B cell (primary cell): ENCODE measurements at regions of chr20 and their contacts with region 1.

Region 1: DNA sequence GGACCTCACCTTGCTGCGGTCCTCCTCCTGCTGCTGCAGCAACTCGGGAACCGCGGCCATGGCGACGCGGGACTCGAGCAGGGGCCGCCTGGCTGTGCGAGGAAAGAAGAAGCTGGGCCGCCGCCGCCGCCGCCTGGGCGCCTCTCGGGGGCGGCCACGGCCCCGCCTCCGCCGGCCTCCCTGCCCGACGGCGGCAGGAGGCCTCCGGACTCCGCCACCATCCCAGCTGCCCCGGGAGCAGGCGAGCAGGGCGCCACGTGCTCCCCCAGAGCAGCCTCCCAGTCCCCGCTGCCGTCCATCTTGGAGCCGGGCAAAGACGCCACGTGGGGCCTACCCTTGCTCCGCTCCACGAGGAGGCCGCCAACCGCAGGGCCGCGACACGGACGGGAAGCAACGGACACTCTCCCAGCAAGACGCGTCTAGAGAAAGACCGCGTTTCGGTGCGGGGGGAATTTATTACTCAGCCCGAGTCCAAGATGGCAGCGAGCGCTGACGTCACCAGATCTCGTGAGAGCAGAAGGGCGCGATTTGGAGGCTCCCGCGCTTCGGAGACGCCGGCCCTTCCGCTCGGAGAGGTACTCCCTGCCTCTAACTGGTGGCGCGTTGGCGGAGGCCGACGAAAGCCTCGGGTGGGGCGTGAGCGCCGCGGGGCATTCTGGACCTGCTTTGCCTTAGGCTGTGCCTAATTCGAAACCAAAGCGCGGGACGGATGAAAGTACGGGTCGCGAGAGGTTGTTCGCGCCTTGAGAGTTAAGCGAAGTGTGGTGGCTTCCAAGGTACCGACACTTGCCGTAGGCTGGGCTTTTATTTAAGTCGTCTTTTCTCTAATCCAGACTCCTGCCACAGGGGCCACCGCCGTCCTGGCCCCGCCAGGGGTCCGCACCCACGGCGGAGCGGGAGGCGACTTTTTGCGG is at the starts of genes MGME1 and SNX5:
- DNase-seq: peak; percentile 100
- ATAC-seq: peak; percentile 82
- H3K4me3 ChIP-seq: peak within 1 kb of the TSS; percentile 76 to 99 (median 97)
- H3K4me3 Mint-ChIP-seq: peak within 1 kb of the TSS; percentile 96
- H3K27ac ChIP-seq: peak within 1 kb of the TSS; percentile 96 to 97
- H3K27ac Mint-ChIP-seq: peak within 1 kb of the TSS; percentile 98
- H3K4me1 ChIP-seq: peaks cover 58 to 60% of the 10 kb centered on the region in 2 donors
- H3K4me1 Mint-ChIP-seq: peaks cover 78% of the 10 kb centered on the region
- H3K27me3 ChIP-seq: no peaks in the 10 kb centered on the region
- H3K27me3 Mint-ChIP-seq: no peaks in the 10 kb centered on the region
- CTCF ChIP-seq: no peak
- total RNA-seq, gene MGME1: 33.2 and 33.3 TPM in 2 replicates
- total RNA-seq, gene SNX5: 119 and 128 TPM in 2 replicates

Region 2: DNA sequence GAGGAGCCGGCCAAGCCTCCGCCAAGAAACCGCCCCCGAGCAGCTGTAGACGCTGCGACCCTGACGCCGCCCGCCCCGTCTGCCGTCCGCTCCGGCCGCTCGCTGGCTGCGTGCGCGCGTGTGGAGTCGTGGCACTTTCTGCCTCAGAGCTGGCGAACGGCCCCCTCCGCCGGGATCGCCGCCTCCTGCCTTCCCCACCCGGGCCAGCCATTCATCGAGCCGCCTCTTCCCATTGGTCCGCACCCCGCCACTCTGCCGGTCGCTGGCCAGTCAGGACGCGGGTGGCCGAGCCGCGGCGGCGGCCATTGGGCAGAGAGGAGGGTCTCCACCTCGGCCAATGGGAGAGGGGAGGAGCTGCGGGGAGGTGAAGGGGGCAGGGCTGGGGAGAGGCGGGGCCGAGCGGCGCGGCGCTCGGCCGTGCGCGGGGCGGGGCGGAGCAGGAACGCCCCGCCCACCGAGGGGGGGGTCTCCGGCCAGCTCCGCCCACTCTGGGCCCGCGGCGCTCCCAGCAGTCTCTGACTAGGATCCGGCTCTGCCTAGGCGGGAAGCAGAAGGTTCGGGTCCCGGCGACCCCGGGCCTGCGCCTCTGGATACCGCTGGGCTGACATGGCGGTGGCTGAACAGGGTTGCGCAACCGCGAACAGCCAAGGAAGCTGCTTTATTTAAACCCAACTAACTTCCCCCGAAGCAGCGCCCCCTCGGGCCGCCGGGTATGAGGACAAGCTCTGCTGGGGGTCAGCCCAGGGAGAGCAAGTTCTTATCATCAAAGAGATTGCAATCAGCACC is 286.3 kb before region 1 on chr20 and contains the start of gene RRBP1:
- CTCF ChIA-PET with region 1: interaction called, 29 read pairs
- POLR2A ChIA-PET with region 1: interaction called, 10 read pairs
- intact Hi-C with region 1: loop called (anchors 1 kb)
- DNase-seq: peak; percentile 97
- ATAC-seq: peak; percentile 92
- H3K4me3 ChIP-seq: peak within 1 kb of the TSS; percentile 51 to 85 (median 72)
- H3K4me3 Mint-ChIP-seq: peak within 1 kb of the TSS; percentile 92
- H3K27ac ChIP-seq: peak within 1 kb of the TSS; percentile 46 to 74
- H3K27ac Mint-ChIP-seq: peak within 1 kb of the TSS; percentile 92
- H3K4me1 ChIP-seq: peaks cover 15 to 18% of the 10 kb centered on the region in 2 donors
- H3K4me1 Mint-ChIP-seq: peaks cover 20% of the 10 kb centered on the region
- H3K27me3 ChIP-seq: peaks cover 0 to 11% (median 4%) of the 10 kb centered on the region in 4 experiments
- H3K27me3 Mint-ChIP-seq: peaks cover 29% of the 10 kb centered on the region
- CTCF ChIP-seq: peak; percentile 90
- total RNA-seq, gene RRBP1: 27.5 and 29.1 TPM in 2 replicates

Region 3: DNA sequence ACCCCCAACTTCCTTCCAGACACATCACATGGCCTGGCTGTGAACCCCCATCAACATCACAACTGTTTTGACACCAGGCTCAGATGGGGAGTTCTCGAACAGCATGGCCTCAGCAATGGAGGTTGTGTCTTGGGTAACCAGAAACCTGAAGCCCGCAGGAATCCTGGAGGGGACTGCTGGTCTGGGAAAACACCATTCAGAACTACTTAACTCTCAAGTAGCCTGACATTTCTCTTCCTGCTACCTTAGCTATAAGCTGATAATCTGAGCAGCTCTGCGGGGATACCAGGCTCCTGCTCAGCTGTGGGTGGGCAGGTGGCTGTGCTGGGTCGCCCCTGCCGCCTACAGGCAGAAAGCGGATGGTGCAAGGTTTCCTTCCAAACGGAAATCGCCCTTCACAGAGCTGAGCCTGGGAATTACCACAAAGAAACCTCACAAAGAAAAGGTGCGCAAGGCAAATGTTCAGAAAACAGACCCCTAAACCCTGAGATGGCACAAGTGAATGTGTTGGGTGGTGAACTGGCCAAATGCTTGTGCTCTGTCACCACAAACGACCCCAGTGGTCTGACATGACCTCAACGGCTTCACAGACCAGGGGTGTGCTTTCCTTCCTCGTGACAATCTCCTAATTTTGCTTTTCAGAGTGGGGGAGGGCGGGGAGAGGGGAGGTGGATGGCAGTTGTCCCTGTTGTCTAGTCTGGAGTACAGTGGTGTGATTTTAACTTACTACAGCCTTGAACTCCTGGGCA is 29.6 kb before region 1 on chr20:
- CTCF ChIA-PET with region 1: interaction called, 31 read pairs
- POLR2A ChIA-PET with region 1: no interaction called
- intact Hi-C with region 1: loop called (anchors 1 kb)
- DNase-seq: peak; percentile 79
- ATAC-seq: peak; percentile 89
- H3K4me3 ChIP-seq: no peak overlapping the region
- H3K4me3 Mint-ChIP-seq: peak overlapping the region; percentile 54
- H3K27ac ChIP-seq: peak overlapping the region in 1 of 2 donors; percentile 55
- H3K27ac Mint-ChIP-seq: peak overlapping the region; percentile 56
- H3K4me1 ChIP-seq: peaks cover 24 to 26% of the 10 kb centered on the region in 2 donors
- H3K4me1 Mint-ChIP-seq: peaks cover 36% of the 10 kb centered on the region
- H3K27me3 ChIP-seq: no peaks in the 10 kb centered on the region
- H3K27me3 Mint-ChIP-seq: no peaks in the 10 kb centered on the region
- CTCF ChIP-seq: peak; percentile 88

Region 4: DNA sequence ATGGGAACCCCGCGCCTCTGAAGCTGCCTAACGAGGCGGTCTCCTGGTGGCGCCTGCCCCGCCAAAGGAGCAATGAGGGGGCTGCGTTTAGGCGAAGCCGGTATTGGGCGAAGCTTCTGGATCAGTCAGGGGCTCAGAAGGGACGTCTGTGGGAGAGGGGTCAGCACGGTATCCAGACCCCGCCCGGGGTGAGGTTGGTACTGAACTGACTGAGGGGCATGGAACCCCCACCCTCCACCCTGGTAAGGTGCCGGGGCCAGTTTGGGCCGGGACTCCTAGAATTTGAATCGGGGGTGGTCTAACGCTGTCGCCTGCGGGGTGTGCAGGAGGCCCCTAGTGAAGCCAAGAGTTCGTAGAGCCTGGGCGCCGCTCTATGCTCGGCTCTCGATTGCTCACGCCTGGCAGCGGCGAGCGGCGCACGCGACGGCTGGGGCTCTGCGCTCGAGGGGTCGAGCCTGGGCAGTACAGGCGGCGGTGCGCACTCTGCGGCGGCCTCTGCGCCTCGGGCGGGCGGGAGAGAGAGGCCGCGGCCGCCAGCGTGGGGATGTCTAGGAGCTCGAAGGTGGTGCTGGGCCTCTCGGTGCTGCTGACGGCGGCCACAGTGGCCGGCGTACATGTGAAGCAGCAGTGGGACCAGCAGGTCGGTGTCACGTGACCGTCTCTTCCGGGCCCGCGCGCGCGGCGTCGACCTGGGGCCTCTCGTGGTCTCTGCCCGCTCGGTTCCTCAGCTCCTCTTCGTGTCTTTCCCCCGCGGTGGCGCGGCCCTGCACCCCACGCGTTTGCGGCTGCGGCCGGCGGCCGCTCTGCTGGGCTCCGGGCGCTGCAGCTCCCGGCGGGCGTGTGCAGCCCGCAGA is 169.0 kb after region 1 on chr20 and contains the starts of genes KAT14 and PET117:
- CTCF ChIA-PET with region 1: interaction called, 5 read pairs
- POLR2A ChIA-PET with region 1: no interaction called
- intact Hi-C with region 1: loop called (anchors 2 kb)
- DNase-seq: peak; percentile 97
- ATAC-seq: peak; percentile 88
- H3K4me3 ChIP-seq: peak within 1 kb of the TSS; percentile 48 to 93 (median 85)
- H3K4me3 Mint-ChIP-seq: peak within 1 kb of the TSS; percentile 92
- H3K27ac ChIP-seq: peak within 1 kb of the TSS; percentile 65 to 77
- H3K27ac Mint-ChIP-seq: peak within 1 kb of the TSS; percentile 95
- H3K4me1 ChIP-seq: peaks cover 15 to 25% of the 10 kb centered on the region in 2 donors
- H3K4me1 Mint-ChIP-seq: peaks cover 27% of the 10 kb centered on the region
- H3K27me3 ChIP-seq: peaks cover 0 to 4% (median 0%) of the 10 kb centered on the region in 4 experiments
- H3K27me3 Mint-ChIP-seq: no peaks in the 10 kb centered on the region
- CTCF ChIP-seq: no peak
- total RNA-seq, gene KAT14: 15.1 and 15.5 TPM in 2 replicates
- total RNA-seq, gene PET117: 10.7 and 13.0 TPM in 2 replicates

Region 5: GRCh38 chr20:18507218-18508021 is 538.8 kb after region 1 on chr20 and contains the start of gene SEC23B:
- CTCF ChIA-PET with region 1: no interaction called
- POLR2A ChIA-PET with region 1: interaction called, 3 read pairs
- intact Hi-C with region 1: loop called (anchors 2 kb)
- DNase-seq: peak; percentile 100
- ATAC-seq: peak; percentile 89
- H3K4me3 ChIP-seq: peak within 1 kb of the TSS; percentile 57 to 88 (median 80)
- H3K4me3 Mint-ChIP-seq: peak within 1 kb of the TSS; percentile 99
- H3K27ac ChIP-seq: peak within 1 kb of the TSS; percentile 98
- H3K27ac Mint-ChIP-seq: peak within 1 kb of the TSS; percentile 98
- H3K4me1 ChIP-seq: peaks cover 13 to 17% of the 10 kb centered on the region in 2 donors
- H3K4me1 Mint-ChIP-seq: peaks cover 22% of the 10 kb centered on the region
- H3K27me3 ChIP-seq: no peaks in the 10 kb centered on the region
- H3K27me3 Mint-ChIP-seq: peaks cover 6% of the 10 kb centered on the region
- CTCF ChIP-seq: no peak
- total RNA-seq, gene SEC23B: 39.4 and 48.1 TPM in 2 replicates

Region 6: DNA sequence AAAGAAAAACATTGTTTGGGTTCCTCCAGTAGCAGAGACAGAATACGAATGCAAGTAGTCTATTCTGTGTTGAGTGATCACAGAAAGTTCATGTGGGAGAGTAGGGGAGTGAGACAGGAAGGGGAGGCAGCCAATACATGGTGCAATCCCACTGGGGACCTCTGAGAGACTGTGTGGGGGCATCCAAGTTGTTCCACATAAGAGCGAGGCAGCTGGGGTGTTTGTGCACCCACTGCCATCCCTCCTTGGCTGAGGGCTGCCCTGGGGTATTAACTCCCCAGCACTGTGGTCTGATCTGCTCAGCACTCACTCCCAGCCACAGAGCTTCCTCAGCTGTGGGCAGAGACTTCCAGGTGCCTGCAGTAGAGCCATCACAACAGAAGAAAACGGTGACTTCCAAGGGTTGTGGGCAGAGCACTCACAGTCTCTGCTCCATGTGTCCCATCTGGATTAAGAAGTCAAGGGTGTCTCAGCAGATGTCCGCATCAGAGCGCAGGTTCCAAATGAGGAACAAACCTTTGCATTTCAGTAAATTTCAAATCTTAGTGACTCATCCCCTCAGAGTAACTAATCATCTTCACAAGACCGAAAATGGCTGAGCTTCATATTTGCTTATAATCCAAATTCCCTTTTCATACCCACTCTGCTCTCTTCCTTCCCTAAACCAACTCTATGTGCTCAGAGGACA is 1946.6 kb after region 1 on chr20:
- CTCF ChIA-PET with region 1: no interaction called
- POLR2A ChIA-PET with region 1: no interaction called
- intact Hi-C with region 1: loop called (anchors 5 kb)
- DNase-seq: peak; percentile 47
- ATAC-seq: peak; percentile 66
- H3K4me3 ChIP-seq: no peak overlapping the region
- H3K4me3 Mint-ChIP-seq: peak overlapping the region; percentile 6
- H3K27ac ChIP-seq: no peak overlapping the region
- H3K27ac Mint-ChIP-seq: peak overlapping the region; percentile 57
- H3K4me1 ChIP-seq: peaks cover 33 to 47% of the 10 kb centered on the region in 2 donors
- H3K4me1 Mint-ChIP-seq: peaks cover 50% of the 10 kb centered on the region
- H3K27me3 ChIP-seq: no peaks in the 10 kb centered on the region
- H3K27me3 Mint-ChIP-seq: no peaks in the 10 kb centered on the region
- CTCF ChIP-seq: no peak